Pancreas (tissue), 10 donors: ENCODE measurements at regions of chr3 and their contacts with region 1.

Region 1: GRCh38 chr3:194333212-194333980 is 17.7 kb downstream of the CPN2 start:
- DNase-seq: peak; percentile 74 to 99 (median 88)
- ATAC-seq: peak; percentile 94 to 97 (median 96)
- H3K4me3 ChIP-seq: peak overlapping the region in 3 of 4 donors; percentile 12 to 54 (median 40)
- H3K27ac ChIP-seq: no peak overlapping the region
- H3K4me1 ChIP-seq: peaks cover 5 to 11% (median 6%) of the 10 kb centered on the region in 3 donors
- H3K27me3 ChIP-seq: peaks cover 0 to 3% (median 0%) of the 10 kb centered on the region in 4 donors
- CTCF ChIP-seq: peak; percentile 98 to 100 (median 99)

Region 2: GRCh38 chr3:193938613-193939012 is 394.8 kb before region 1 on chr3:
- intact Hi-C with region 1: no loop called
- DNase-seq: no peak
- ATAC-seq: peak in 1 of 4 donors; percentile 43
- H3K4me3 ChIP-seq: no peak overlapping the region
- H3K27ac ChIP-seq: no peak overlapping the region
- H3K4me1 ChIP-seq: no peaks in the 10 kb centered on the region
- H3K27me3 ChIP-seq: no peaks in the 10 kb centered on the region
- CTCF ChIP-seq: no peak

Region 3: GRCh38 chr3:194043516-194043915 is 289.9 kb before region 1 on chr3:
- intact Hi-C with region 1: no loop called
- DNase-seq: no peak
- ATAC-seq: no peak
- H3K4me3 ChIP-seq: no peak overlapping the region
- H3K27ac ChIP-seq: no peak overlapping the region
- H3K4me1 ChIP-seq: peaks cover 6 to 10% (median 9%) of the 10 kb centered on the region in 3 donors
- H3K27me3 ChIP-seq: no peaks in the 10 kb centered on the region
- CTCF ChIP-seq: no peak

Region 4: GRCh38 chr3:194404365-194405140 is 71.2 kb after region 1 on chr3:
- intact Hi-C with region 1: loop called in 2 of 3 experiments (anchors 5 kb)
- DNase-seq: peak in 1 of 6 donors; percentile 31
- ATAC-seq: peak; percentile 61 to 78 (median 74)
- H3K4me3 ChIP-seq: no peak overlapping the region
- H3K27ac ChIP-seq: peak overlapping the region in 1 of 4 donors; percentile 9
- H3K4me1 ChIP-seq: peaks cover 0 to 6% (median 0%) of the 10 kb centered on the region in 3 donors
- H3K27me3 ChIP-seq: no peaks in the 10 kb centered on the region
- CTCF ChIP-seq: peak in 3 of 4 donors; percentile 36 to 57 (median 57)

Region 5: DNA sequence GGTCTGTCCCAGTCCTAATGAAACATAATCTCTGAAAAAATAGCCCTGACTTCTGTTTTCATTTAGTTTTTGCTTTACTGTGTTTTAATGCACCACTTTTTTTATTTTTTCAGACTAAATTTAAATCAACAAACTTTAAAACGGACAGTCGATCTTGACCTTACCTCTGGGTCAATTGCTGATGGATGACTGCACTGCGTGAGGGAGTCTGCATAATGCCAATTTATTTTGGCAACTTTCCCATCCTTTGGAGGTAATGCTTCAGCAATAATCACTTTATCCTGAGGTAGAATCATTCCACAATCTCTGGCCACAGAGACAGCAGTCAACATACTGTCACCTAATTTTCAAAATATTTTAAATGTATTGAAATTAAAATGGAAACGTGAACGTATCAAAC is 98.2 kb after region 1 on chr3:
- intact Hi-C with region 1: no loop called
- DNase-seq: no peak
- ATAC-seq: peak in 1 of 4 donors; percentile 35
- H3K4me3 ChIP-seq: no peak overlapping the region
- H3K27ac ChIP-seq: no peak overlapping the region
- H3K4me1 ChIP-seq: no peaks in the 10 kb centered on the region
- H3K27me3 ChIP-seq: no peaks in the 10 kb centered on the region
- CTCF ChIP-seq: no peak

Region 6: DNA sequence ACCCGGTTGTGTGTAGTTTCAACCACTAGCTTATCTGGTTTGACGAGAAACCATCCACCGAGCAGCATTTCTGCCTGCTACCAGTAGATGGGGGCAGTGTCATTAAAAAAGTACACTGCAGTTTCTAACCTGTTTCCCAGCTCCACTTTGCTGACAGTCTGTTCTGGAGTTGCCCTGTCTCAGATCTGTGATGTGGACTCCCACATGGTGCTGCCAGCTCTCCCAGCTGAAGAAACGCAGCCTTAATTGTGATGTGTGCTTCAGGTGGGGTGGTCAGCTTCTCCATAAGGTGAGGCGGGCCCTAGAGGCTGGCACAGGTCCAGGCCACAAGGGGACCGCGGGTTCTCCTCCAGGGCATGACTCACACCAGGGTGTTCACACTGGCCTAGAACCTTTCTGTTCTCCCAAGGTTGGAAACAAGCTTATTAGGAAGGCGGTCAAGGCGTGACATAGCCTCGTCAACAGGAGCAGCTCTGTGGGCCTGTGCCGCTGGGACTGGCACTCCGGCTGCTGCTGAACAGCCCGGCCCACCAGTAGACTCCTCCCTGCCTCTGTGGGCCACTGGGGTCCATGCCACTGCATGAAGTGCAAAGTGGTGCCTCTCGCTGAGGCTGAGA is 349.4 kb after region 1 on chr3:
- intact Hi-C with region 1: no loop called
- DNase-seq: peak; percentile 61 to 85 (median 68)
- ATAC-seq: peak; percentile 78 to 90 (median 90)
- H3K4me3 ChIP-seq: no peak overlapping the region
- H3K27ac ChIP-seq: no peak overlapping the region
- H3K4me1 ChIP-seq: peaks cover 8 to 10% (median 10%) of the 10 kb centered on the region in 3 donors
- H3K27me3 ChIP-seq: peaks cover 0 to 17% (median 0%) of the 10 kb centered on the region in 4 donors
- CTCF ChIP-seq: peak; percentile 57 to 76 (median 70)